ENCODE measurements at regions of chr9 and their contacts with region 1.

Region 1: DNA sequence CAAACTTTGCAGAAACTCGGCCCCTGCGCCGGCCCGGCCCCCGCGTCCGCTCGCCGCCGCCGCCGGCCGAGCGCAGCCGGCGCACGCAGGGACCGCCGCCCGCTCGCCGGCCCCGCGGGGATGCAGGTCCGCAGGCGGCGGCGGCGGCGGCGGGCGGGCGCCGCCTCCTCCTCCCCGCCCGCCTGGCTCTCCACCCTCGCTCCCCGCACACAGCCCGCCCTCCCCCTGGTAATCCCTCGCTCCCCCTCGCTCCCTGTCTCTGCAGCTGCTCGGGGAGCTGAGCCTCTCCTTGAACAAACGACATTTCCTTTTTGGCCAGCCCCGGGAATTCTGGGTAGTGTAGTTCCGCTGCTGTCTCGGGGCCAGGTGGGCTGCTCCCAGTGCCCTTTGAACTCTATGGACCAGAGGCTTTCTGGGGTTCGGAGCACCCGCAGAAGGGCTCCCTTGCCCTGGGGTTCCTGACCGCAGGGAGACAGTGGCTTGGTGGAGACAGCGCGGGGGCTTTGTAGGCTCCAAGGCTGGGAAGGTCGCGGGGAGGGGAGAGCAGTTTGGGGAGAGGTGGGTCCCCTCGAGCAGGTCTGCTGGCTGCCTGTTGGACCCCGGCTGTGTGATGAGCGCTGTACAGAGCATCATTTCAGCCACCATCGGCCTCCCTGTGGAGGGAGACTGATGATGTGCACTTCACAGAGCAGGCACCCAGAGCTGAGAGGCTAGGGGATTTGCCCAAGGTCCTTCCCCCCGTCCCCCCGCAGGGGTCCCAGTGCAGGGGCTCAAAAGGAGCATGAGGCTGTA is 1.8 kb upstream of the FAM78A start:
- DNase-seq: peak; percentile 45 to 89 (median 66)
- ATAC-seq: peak; percentile 55
- H3K4me3 ChIP-seq: peak overlapping the region; percentile 99
- H3K4me3 Mint-ChIP-seq: peak overlapping the region; percentile 93
- H3K27ac ChIP-seq: peak overlapping the region; percentile 73 to 82
- H3K27ac Mint-ChIP-seq: peak overlapping the region; percentile 94
- H3K4me1 ChIP-seq: peaks cover 32% of the 10 kb centered on the region
- H3K4me1 Mint-ChIP-seq: peaks cover 32% of the 10 kb centered on the region
- H3K27me3 ChIP-seq: peaks cover 0 to 9% of the 10 kb centered on the region in 2 experiments
- H3K27me3 Mint-ChIP-seq: no peaks in the 10 kb centered on the region
- CTCF ChIP-seq: no peak

Region 2: GRCh38 chr9:131068076-131068816 is 209.9 kb before region 1 on chr9:
- CTCF ChIA-PET with region 1: no interaction called
- POLR2A ChIA-PET with region 1: no interaction called
- intact Hi-C with region 1: no loop called
- DNase-seq: no peak
- ATAC-seq: no peak
- H3K4me3 ChIP-seq: no peak overlapping the region
- H3K4me3 Mint-ChIP-seq: no peak overlapping the region
- H3K27ac ChIP-seq: no peak overlapping the region
- H3K27ac Mint-ChIP-seq: no peak overlapping the region
- H3K4me1 ChIP-seq: no peaks in the 10 kb centered on the region
- H3K4me1 Mint-ChIP-seq: no peaks in the 10 kb centered on the region
- H3K27me3 ChIP-seq: no peaks in the 10 kb centered on the region
- H3K27me3 Mint-ChIP-seq: no peaks in the 10 kb centered on the region
- CTCF ChIP-seq: no peak

Region 3: DNA sequence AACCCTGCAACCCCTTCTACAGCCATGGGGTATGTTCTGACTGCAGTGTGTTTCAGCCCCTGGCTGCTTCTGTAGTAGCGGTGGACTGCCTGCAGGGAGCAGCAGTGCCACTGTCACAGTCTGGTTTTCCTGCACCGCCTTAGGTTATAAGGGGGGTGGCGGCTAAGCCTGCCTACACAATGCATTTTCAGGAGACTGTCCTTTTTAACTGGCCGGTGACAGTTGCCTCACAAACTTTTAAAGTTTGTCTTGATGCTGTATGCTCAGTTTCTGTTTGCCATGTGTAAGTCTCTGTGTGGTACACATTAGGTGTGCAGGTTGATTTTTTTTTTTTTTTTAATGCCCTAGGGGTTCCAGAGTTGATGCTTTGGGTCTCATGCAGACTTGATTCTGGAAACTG is 99.7 kb before region 1 on chr9:
- CTCF ChIA-PET with region 1: interaction called, 6 read pairs
- POLR2A ChIA-PET with region 1: interaction called, 4 read pairs
- intact Hi-C with region 1: loop called in 1 of 2 experiments (anchors 5 kb)
- DNase-seq: peak; percentile 63 to 85 (median 74)
- ATAC-seq: peak; percentile 100
- H3K4me3 ChIP-seq: no peak overlapping the region
- H3K4me3 Mint-ChIP-seq: no peak overlapping the region
- H3K27ac ChIP-seq: no peak overlapping the region
- H3K27ac Mint-ChIP-seq: no peak overlapping the region
- H3K4me1 ChIP-seq: peaks cover 3% of the 10 kb centered on the region
- H3K4me1 Mint-ChIP-seq: peaks cover 26% of the 10 kb centered on the region
- H3K27me3 ChIP-seq: no peaks in the 10 kb centered on the region
- H3K27me3 Mint-ChIP-seq: no peaks in the 10 kb centered on the region
- CTCF ChIP-seq: peak; percentile 97

Region 4: DNA sequence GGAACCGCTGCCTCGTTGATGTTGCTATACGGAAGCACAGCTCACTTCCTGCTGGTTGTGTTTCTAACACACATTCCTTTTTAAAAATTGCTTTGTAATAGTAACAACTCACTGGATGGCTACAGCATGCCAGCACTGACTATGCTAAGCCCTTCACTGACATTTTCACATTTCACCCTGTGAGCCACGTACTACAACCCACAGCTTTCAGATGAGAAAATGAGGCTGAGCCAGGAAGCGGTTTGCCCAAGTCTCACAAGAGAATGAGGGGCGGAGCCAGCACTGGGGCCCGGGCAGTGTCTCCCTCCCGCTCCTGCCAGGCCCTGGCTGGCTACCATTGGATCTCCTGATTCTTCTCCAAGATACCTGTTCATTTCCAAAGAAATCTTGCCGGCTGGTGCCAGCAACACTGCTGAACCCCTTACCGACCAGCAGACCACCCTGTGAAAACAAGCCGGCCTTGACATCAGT is 40.1 kb before region 1 on chr9:
- CTCF ChIA-PET with region 1: no interaction called
- POLR2A ChIA-PET with region 1: interaction called, 132 read pairs
- intact Hi-C with region 1: loop called in 1 of 2 experiments (anchors 2 kb)
- DNase-seq: peak; percentile 74 to 93 (median 82)
- ATAC-seq: peak; percentile 92
- H3K4me3 ChIP-seq: peak overlapping the region; percentile 43
- H3K4me3 Mint-ChIP-seq: peak overlapping the region; percentile 84
- H3K27ac ChIP-seq: peak overlapping the region; percentile 52 to 79
- H3K27ac Mint-ChIP-seq: peak overlapping the region; percentile 95
- H3K4me1 ChIP-seq: peaks cover 76% of the 10 kb centered on the region
- H3K4me1 Mint-ChIP-seq: peaks cover 52% of the 10 kb centered on the region
- H3K27me3 ChIP-seq: no peaks in the 10 kb centered on the region
- H3K27me3 Mint-ChIP-seq: no peaks in the 10 kb centered on the region
- CTCF ChIP-seq: no peak

Region 5: GRCh38 chr9:131253891-131254491 is 24.1 kb before region 1 on chr9:
- CTCF ChIA-PET with region 1: interaction called, 5 read pairs
- POLR2A ChIA-PET with region 1: interaction called, 738 read pairs
- intact Hi-C with region 1: loop called (anchors 2 kb)
- DNase-seq: peak in 3 of 14 experiments; percentile 31 to 57 (median 42)
- ATAC-seq: no peak
- H3K4me3 ChIP-seq: no peak overlapping the region
- H3K4me3 Mint-ChIP-seq: peak overlapping the region; percentile 85
- H3K27ac ChIP-seq: peak overlapping the region; percentile 9 to 52
- H3K27ac Mint-ChIP-seq: peak overlapping the region; percentile 98
- H3K4me1 ChIP-seq: peaks cover 84% of the 10 kb centered on the region
- H3K4me1 Mint-ChIP-seq: peaks cover 53% of the 10 kb centered on the region
- H3K27me3 ChIP-seq: no peaks in the 10 kb centered on the region
- H3K27me3 Mint-ChIP-seq: no peaks in the 10 kb centered on the region
- CTCF ChIP-seq: no peak

Region 6: DNA sequence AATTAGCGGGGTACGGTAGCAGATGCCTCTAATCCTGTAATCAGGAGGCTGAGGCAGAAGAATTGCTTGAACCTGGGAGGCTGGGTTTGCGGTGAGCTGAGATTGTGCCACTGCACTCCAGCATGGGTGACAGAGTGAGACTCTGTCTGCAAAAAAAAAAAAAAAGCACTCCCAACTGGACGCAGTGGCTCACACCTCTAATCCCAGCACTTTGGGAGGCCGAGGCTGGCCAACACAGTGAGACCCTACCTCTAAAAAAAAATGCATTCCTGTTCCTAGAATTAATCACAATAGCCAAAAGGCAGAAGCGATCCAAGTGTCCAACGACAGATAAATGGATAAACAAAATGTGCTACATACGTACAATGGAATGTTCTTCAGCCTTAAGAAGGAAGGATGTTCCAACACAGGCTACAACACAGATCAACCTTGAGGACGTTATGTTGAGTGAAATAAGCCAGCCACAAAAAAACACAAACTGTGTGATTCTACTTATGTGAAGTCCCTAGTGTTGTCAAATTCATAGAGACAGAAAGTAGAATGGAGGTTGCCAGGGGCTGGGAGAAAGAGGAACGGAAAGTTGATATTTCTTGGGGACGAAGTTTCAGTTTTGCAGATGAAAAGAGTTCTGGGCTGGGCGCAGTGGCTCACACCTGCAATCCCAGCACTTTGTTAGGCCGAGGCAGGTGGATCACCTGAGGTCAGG is 15.6 kb before region 1 on chr9:
- CTCF ChIA-PET with region 1: interaction called, 3 read pairs
- POLR2A ChIA-PET with region 1: interaction called, 738 read pairs
- intact Hi-C with region 1: loop called in 1 of 2 experiments (anchors 1 kb)
- DNase-seq: peak in 3 of 14 experiments; percentile 2 to 35 (median 22)
- ATAC-seq: no peak
- H3K4me3 ChIP-seq: no peak overlapping the region
- H3K4me3 Mint-ChIP-seq: peak overlapping the region; percentile 69
- H3K27ac ChIP-seq: no peak overlapping the region
- H3K27ac Mint-ChIP-seq: peak overlapping the region; percentile 100
- H3K4me1 ChIP-seq: peaks cover 99% of the 10 kb centered on the region
- H3K4me1 Mint-ChIP-seq: peaks cover 72% of the 10 kb centered on the region
- H3K27me3 ChIP-seq: no peaks in the 10 kb centered on the region
- H3K27me3 Mint-ChIP-seq: no peaks in the 10 kb centered on the region
- CTCF ChIP-seq: no peak

Region 7: DNA sequence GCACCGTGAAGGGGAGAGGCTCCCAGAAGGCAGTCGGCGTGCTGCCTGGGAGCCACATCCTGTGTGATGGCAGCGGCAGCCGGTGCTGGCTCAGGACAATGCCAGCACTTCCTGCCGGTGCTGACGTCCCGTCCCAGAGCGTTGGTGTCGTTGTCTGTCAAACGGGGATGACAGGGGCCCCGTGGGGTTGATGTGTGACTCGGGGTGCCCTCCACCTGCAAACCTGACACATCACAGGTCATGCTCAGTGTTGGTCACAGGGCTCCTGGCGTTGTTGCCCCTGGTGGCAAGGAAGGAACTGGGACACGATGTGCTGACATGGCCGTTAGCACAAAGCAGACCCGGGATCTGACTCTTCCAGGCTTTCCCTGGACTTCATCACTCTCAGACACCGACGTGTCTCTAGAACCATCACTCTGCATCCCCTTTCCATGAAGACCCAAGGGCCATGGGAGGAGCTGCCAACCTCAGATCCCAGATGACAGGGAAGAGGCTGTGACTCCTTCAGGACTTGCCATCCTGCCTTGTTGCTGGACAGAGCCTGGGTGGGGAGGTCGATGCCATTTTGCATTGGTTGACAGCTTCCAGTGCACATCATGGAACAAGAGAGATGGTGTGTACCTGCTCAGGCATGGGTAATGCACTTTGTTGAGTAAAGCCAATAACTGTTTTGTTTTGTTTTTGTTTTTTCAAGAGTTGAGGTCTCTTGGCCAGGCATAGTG is 32.9 kb after region 1 on chr9:
- CTCF ChIA-PET with region 1: no interaction called
- POLR2A ChIA-PET with region 1: interaction called, 3 read pairs
- intact Hi-C with region 1: loop called in 1 of 2 experiments (anchors 5 kb)
- DNase-seq: peak; percentile 36 to 88 (median 60)
- ATAC-seq: peak; percentile 98
- H3K4me3 ChIP-seq: peak overlapping the region; percentile 40
- H3K4me3 Mint-ChIP-seq: peak overlapping the region; percentile 54
- H3K27ac ChIP-seq: no peak overlapping the region
- H3K27ac Mint-ChIP-seq: peak overlapping the region; percentile 73
- H3K4me1 ChIP-seq: peaks cover 15% of the 10 kb centered on the region
- H3K4me1 Mint-ChIP-seq: peaks cover 16% of the 10 kb centered on the region
- H3K27me3 ChIP-seq: no peaks in the 10 kb centered on the region
- H3K27me3 Mint-ChIP-seq: no peaks in the 10 kb centered on the region
- CTCF ChIP-seq: no peak

Region 8: GRCh38 chr9:131334629-131335367 is 56.7 kb after region 1 on chr9:
- CTCF ChIA-PET with region 1: interaction called, 9 read pairs
- POLR2A ChIA-PET with region 1: no interaction called
- intact Hi-C with region 1: loop called (anchors 5 to 10 kb)
- DNase-seq: no peak
- ATAC-seq: no peak
- H3K4me3 ChIP-seq: no peak overlapping the region
- H3K4me3 Mint-ChIP-seq: no peak overlapping the region
- H3K27ac ChIP-seq: no peak overlapping the region
- H3K27ac Mint-ChIP-seq: no peak overlapping the region
- H3K4me1 ChIP-seq: peaks cover 7% of the 10 kb centered on the region
- H3K4me1 Mint-ChIP-seq: peaks cover 4% of the 10 kb centered on the region
- H3K27me3 ChIP-seq: no peaks in the 10 kb centered on the region
- H3K27me3 Mint-ChIP-seq: no peaks in the 10 kb centered on the region
- CTCF ChIP-seq: no peak